ENCODE measurements at regions of chr19 and their contacts with region 1.

Region 1: GRCh38 chr19:34269968-34270621 is 15.7 kb downstream of the GARRE1 start:
- DNase-seq: peak; percentile 49 to 89 (median 74)
- ATAC-seq: peak; percentile 92 to 94 (median 94)
- H3K4me3 ChIP-seq: peak overlapping the region; percentile 6 to 15
- H3K4me3 Mint-ChIP-seq: peak overlapping the region; percentile 43 to 72 (median 50)
- H3K27ac ChIP-seq: peak overlapping the region; percentile 86
- H3K27ac Mint-ChIP-seq: peak overlapping the region; percentile 83 to 85
- H3K4me1 ChIP-seq: peaks cover 38 to 79% of the 10 kb centered on the region in 2 experiments
- H3K4me1 Mint-ChIP-seq: peaks cover 80 to 87% (median 86%) of the 10 kb centered on the region in 3 donors
- H3K27me3 ChIP-seq: no peaks in the 10 kb centered on the region
- H3K27me3 Mint-ChIP-seq: no peaks in the 10 kb centered on the region

Region 2: DNA sequence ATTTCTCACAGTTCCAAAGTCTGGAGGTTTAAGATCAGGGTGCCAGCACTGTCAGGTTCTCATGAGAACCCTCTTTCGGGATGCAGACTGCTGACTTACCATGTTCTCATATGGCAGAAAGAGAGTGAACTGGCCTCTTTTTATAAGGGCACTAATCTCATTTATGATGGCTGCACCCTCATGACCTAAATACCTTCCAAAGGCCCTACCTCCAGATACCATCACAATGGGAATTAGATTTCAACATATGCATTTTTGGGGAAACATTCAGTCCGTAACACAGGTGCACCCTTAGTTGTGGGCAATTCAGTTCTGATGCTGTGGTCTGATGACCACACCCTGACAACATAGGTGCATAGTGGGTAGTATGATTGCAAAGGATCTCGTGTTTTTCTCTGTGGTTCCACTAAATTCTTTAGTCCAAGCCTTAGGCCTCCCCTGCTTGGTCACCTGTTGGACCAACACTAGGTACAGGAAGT is 17.6 kb after region 1 on chr19:
- CTCF ChIA-PET with region 1: interaction called, 3 to 5 read pairs
- POLR2A ChIA-PET with region 1: interaction called in 1 of 2 experiments, 12 read pairs
- DNase-seq: no peak
- ATAC-seq: peak in 1 of 4 experiments; percentile 22
- H3K4me3 ChIP-seq: no peak overlapping the region
- H3K4me3 Mint-ChIP-seq: no peak overlapping the region
- H3K27ac ChIP-seq: no peak overlapping the region
- H3K27ac Mint-ChIP-seq: peak overlapping the region in 1 of 2 donors; percentile 36
- H3K4me1 ChIP-seq: peaks cover 0 to 6% of the 10 kb centered on the region in 2 experiments
- H3K4me1 Mint-ChIP-seq: peaks cover 25 to 30% (median 25%) of the 10 kb centered on the region in 3 donors
- H3K27me3 ChIP-seq: no peaks in the 10 kb centered on the region
- H3K27me3 Mint-ChIP-seq: no peaks in the 10 kb centered on the region

Region 3: GRCh38 chr19:34300380-34300779 is 30.3 kb after region 1 on chr19:
- CTCF ChIA-PET with region 1: no interaction called
- POLR2A ChIA-PET with region 1: no interaction called
- DNase-seq: no peak
- ATAC-seq: no peak
- H3K4me3 ChIP-seq: no peak overlapping the region
- H3K4me3 Mint-ChIP-seq: no peak overlapping the region
- H3K27ac ChIP-seq: no peak overlapping the region
- H3K27ac Mint-ChIP-seq: peak overlapping the region in 1 of 2 donors; percentile 43
- H3K4me1 ChIP-seq: no peaks in the 10 kb centered on the region
- H3K4me1 Mint-ChIP-seq: peaks cover 10 to 18% (median 13%) of the 10 kb centered on the region in 3 donors
- H3K27me3 ChIP-seq: no peaks in the 10 kb centered on the region
- H3K27me3 Mint-ChIP-seq: no peaks in the 10 kb centered on the region

Region 4: DNA sequence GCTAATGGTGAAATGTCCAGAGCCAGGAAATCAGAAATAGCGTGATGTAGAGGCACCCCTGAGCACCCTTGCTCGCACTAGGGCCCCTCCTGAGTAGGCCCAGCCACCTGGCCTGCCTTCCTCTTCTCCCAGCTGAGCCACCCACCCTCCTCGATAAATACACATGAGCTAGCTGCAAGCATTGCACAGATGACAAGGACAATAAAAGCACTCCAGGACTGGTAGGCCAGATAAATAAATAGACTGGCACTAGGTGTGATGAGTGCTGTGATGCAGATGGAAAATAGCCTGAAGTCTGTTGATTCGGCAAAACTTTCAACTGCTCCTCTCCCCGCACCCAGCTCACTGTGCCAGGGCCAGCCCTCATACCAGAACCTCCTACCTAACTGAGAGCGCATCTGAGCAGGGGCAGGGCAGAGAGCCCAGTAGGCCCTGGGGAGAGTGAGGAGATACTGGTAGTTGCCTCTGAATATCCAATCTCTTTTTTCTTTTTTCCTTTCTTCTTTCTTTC is 40.4 kb after region 1 on chr19:
- CTCF ChIA-PET with region 1: interaction called in 1 of 2 experiments, 8 read pairs
- POLR2A ChIA-PET with region 1: interaction called, 3 to 12 read pairs
- DNase-seq: peak in 5 of 35 experiments; percentile 8 to 51 (median 14)
- ATAC-seq: peak in 1 of 4 experiments; percentile 31
- H3K4me3 ChIP-seq: no peak overlapping the region
- H3K4me3 Mint-ChIP-seq: peak overlapping the region in 1 of 3 donors; percentile 71
- H3K27ac ChIP-seq: peak overlapping the region; percentile 78
- H3K27ac Mint-ChIP-seq: peak overlapping the region; percentile 75 to 92
- H3K4me1 ChIP-seq: peaks cover 8 to 28% of the 10 kb centered on the region in 2 experiments
- H3K4me1 Mint-ChIP-seq: peaks cover 63 to 76% (median 75%) of the 10 kb centered on the region in 3 donors
- H3K27me3 ChIP-seq: no peaks in the 10 kb centered on the region
- H3K27me3 Mint-ChIP-seq: no peaks in the 10 kb centered on the region

Region 5: DNA sequence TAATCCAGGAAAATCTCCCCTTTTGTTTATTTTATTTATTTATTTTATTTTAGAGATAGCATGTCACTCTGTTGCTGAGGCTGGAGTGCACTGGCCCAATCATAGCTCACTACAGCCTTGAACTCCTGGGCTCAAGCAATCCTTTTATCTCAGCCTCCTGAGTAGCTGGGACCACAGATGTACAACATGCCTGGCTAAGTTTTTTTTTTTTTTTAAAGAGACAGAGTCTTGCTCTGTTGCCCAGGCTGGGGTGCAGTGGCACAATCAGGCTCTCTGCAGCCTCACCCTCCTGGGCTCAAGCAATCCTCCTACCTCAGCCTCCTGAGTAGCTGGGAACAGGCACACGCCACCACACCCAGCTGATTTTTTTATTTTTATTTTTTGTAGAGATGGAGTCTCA is 127.8 kb after region 1 on chr19:
- CTCF ChIA-PET with region 1: no interaction called
- POLR2A ChIA-PET with region 1: no interaction called
- DNase-seq: no peak
- ATAC-seq: no peak
- H3K4me3 ChIP-seq: no peak overlapping the region
- H3K4me3 Mint-ChIP-seq: no peak overlapping the region
- H3K27ac ChIP-seq: no peak overlapping the region
- H3K27ac Mint-ChIP-seq: no peak overlapping the region
- H3K4me1 ChIP-seq: no peaks in the 10 kb centered on the region
- H3K4me1 Mint-ChIP-seq: peaks cover 0 to 2% (median 0%) of the 10 kb centered on the region in 3 donors
- H3K27me3 ChIP-seq: no peaks in the 10 kb centered on the region
- H3K27me3 Mint-ChIP-seq: no peaks in the 10 kb centered on the region